Activated CD8-positive, alpha-beta T cell treated with anti-CD3 and anti-CD28 coated beads for 36 hours (primary cell): ENCODE measurements at regions of chr20 and their contacts with region 1.

Region 1: GRCh38 chr20:53643031-53643832 is 49.6 kb upstream of the ZNF217 start:
- DNase-seq: peak; percentile 78
- ATAC-seq: peak; percentile 89
- H3K4me3 Mint-ChIP-seq: peak overlapping the region; percentile 59
- H3K27ac Mint-ChIP-seq: peak overlapping the region; percentile 85
- H3K4me1 Mint-ChIP-seq: peaks cover 39% of the 10 kb centered on the region
- H3K27me3 Mint-ChIP-seq: no peaks in the 10 kb centered on the region
- CTCF ChIP-seq: no peak

Region 2: GRCh38 chr20:53623454-53624211 is 19.6 kb before region 1 on chr20:
- CTCF ChIA-PET with region 1: interaction called, 12 read pairs
- POLR2A ChIA-PET with region 1: interaction called, 12 read pairs
- intact Hi-C with region 1: no loop called
- DNase-seq: peak; percentile 63
- ATAC-seq: peak; percentile 65
- H3K4me3 Mint-ChIP-seq: peak overlapping the region; percentile 62
- H3K27ac Mint-ChIP-seq: peak overlapping the region; percentile 95
- H3K4me1 Mint-ChIP-seq: peaks cover 46% of the 10 kb centered on the region
- H3K27me3 Mint-ChIP-seq: no peaks in the 10 kb centered on the region
- CTCF ChIP-seq: no peak

Region 3: GRCh38 chr20:53813636-53814429 is 170.6 kb after region 1 on chr20:
- CTCF ChIA-PET with region 1: no interaction called
- POLR2A ChIA-PET with region 1: no interaction called
- intact Hi-C with region 1: no loop called
- DNase-seq: no peak
- ATAC-seq: no peak
- H3K4me3 Mint-ChIP-seq: no peak overlapping the region
- H3K27ac Mint-ChIP-seq: no peak overlapping the region
- H3K4me1 Mint-ChIP-seq: peaks cover 34% of the 10 kb centered on the region
- H3K27me3 Mint-ChIP-seq: no peaks in the 10 kb centered on the region
- CTCF ChIP-seq: no peak